ENCODE measurements at regions of chr17 and their contacts with region 1.

Region 1: DNA sequence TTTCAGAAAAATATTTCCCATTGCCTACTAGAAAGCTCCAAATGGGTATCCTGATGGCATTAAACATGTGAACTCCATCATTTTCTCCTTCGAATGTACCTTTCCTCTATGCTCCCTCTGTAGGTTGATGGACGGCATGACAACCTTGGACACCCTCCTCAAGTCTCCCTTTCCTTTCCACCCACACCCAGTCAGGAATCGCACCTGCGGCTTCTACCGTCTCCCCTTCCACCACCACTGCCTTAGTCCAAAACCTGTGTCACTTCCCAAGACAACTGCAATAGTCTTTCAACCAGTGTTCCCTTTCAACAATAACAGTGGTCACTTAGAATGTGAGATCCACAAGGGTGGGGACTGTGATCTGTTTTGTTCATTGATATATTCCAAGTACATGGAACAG is 233.1 kb upstream of the AXIN2 start:
- DNase-seq: no peak
- ATAC-seq: no peak
- H3K4me3 ChIP-seq: no peak overlapping the region
- H3K27ac ChIP-seq: no peak overlapping the region
- H3K4me1 ChIP-seq: no peaks in the 10 kb centered on the region
- H3K27me3 ChIP-seq: no peaks in the 10 kb centered on the region
- CTCF ChIP-seq: peak in 3 of 5 experiments; percentile 15 to 29 (median 26)
- POLR2A ChIP-seq: no peak

Region 2: DNA sequence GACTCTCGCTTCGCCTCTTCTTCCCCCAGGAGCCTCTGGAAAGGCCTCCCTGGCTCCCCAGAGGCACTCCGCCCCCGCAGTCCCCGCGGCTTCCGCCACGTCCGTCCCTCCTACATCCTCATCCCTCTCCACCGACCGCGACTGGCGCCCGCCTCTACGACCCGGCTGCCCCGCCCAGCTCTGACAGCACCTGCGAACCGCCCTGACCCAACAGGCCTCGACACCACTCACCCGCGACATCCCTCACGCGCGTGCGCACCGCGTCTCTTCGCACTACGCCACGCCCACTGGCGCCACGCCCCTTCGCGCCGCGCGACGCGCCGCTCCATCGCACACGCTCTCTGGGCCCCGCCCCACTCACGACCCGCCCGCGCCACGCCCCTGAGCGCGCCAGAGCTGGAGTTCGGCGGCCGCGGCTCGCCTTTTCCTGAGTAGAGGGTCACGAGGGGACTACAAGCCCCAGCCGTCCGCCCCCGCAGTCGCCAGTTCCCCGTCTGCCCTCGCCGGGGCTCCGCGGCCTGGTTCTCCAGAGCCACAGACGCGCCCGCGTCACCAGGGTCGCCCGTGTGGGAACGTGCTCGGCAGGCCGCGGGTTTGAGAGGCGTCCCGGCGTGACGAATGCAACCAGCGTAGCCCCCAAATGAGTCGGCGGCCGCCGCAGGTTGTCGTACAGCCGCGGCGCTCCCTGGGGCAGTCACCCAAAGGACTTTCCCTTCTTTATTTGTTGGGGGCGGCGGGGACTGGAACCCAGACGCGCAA is 819.1 kb before region 1 on chr17:
- in situ Hi-C with region 1: loop called in 1 of 4 experiments (anchors 25 kb)
- intact Hi-C with region 1: no loop called
- DNase-seq: peak; percentile 89 to 92
- ATAC-seq: peak; percentile 90 to 94
- H3K4me3 ChIP-seq: peak overlapping the region; percentile 70 to 95 (median 84)
- H3K27ac ChIP-seq: peak overlapping the region; percentile 94 to 100 (median 98)
- H3K4me1 ChIP-seq: peaks cover 13% of the 10 kb centered on the region in 2 donors
- H3K27me3 ChIP-seq: no peaks in the 10 kb centered on the region
- CTCF ChIP-seq: peak in 1 of 5 experiments; percentile 3
- POLR2A ChIP-seq: peak; percentile 93 to 97

Region 3: DNA sequence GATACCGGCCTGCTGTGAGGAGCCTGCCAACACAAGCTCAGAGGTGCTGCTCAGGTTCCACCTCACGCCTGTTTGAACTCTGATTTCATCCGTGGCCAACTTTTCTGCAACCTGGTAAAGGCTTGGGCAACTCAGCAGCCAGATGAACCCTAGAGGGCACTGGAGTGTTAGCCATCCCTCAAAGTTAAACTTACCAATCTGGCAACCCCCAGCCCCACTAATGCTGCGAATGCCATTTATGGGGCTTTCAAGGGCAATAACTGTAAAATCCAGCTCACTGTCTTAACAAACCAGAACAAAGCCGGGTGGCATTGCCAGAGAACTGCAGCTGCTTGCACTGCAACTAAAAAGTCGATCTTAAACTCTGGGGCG is 338.6 kb before region 1 on chr17:
- in situ Hi-C with region 1: no loop called
- intact Hi-C with region 1: loop called (anchors 10 kb)
- DNase-seq: peak; percentile 64 to 84
- ATAC-seq: peak; percentile 83 to 89
- H3K4me3 ChIP-seq: no peak overlapping the region
- H3K27ac ChIP-seq: peak overlapping the region; percentile 69 to 89 (median 75)
- H3K4me1 ChIP-seq: peaks cover 33 to 35% of the 10 kb centered on the region in 2 donors
- H3K27me3 ChIP-seq: no peaks in the 10 kb centered on the region
- CTCF ChIP-seq: peak in 4 of 5 experiments; percentile 47 to 65 (median 58)
- POLR2A ChIP-seq: peak in 1 of 2 donors; percentile 45